AG04450 (cell line): ENCODE measurements at regions of chr19 and their contacts with region 1.

Region 1: GRCh38 chr19:9674663-9675357 is at the start of gene ZNF562:
- DNase-seq: peak; percentile 55
- H3K4me3 ChIP-seq: peak within 1 kb of the TSS; percentile 81
- H3K27ac ChIP-seq: peak within 1 kb of the TSS; percentile 97
- H3K27me3 ChIP-seq: no peaks in the 10 kb centered on the region
- CTCF ChIP-seq: no peak
- polyA plus RNA-seq, gene ZNF562: 14.2 and 17.0 TPM in 2 replicates

Region 2: DNA sequence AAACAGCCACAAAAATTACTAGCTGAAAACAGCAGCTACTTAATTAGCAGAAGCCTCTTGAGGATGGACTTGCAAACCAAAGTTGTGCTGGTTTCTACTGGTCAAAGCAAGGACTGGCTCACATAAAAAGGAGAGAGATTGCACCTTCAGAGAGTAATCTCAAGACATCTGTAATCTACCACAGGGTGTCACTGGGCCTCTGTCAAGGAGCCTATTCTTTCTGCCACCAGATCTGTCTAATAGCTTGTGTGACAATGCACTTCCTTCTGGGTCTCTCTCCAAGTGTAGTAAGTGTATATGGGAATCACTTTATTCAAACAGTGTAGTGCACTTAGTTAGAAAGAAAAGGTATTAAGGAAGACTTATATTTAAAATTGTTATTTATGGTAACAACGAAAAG is 29.3 kb before region 1 on chr19:
- CTCF ChIA-PET with region 1: no interaction called
- POLR2A ChIA-PET with region 1: interaction called, 11 read pairs
- DNase-seq: no peak
- H3K4me3 ChIP-seq: no peak overlapping the region
- H3K27ac ChIP-seq: no peak overlapping the region
- H3K27me3 ChIP-seq: no peaks in the 10 kb centered on the region
- CTCF ChIP-seq: no peak